IMR-90 (cell line): ENCODE measurements at regions of chr11 and their contacts with region 1.

Region 1: GRCh38 chr11:108697872-108698473 is 33.1 kb downstream of the DDX10 start:
- DNase-seq: peak; percentile 82
- ATAC-seq: peak; percentile 92
- H3K4me3 ChIP-seq: no peak overlapping the region
- H3K27ac ChIP-seq: no peak overlapping the region
- H3K4me1 ChIP-seq: peaks cover 10% of the 10 kb centered on the region
- H3K27me3 ChIP-seq: no peaks in the 10 kb centered on the region
- CTCF ChIP-seq: peak; percentile 99
- POLR2A ChIP-seq: peak; percentile 60
- RAD21 ChIP-seq: peak; percentile 99

Region 2: GRCh38 chr11:107648242-107648641 is 1049.7 kb before region 1 on chr11:
- CTCF ChIA-PET with region 1: no interaction called
- POLR2A ChIA-PET with region 1: no interaction called
- dilution Hi-C with region 1: no loop called
- in situ Hi-C with region 1: no loop called
- intact Hi-C with region 1: no loop called
- DNase-seq: no peak
- ATAC-seq: no peak
- H3K4me3 ChIP-seq: no peak overlapping the region
- H3K27ac ChIP-seq: no peak overlapping the region
- H3K4me1 ChIP-seq: no peaks in the 10 kb centered on the region
- H3K27me3 ChIP-seq: peaks cover 4% of the 10 kb centered on the region; the same call in 1 of the 2 replicates
- CTCF ChIP-seq: no peak
- POLR2A ChIP-seq: no peak
- RAD21 ChIP-seq: no peak

Region 3: DNA sequence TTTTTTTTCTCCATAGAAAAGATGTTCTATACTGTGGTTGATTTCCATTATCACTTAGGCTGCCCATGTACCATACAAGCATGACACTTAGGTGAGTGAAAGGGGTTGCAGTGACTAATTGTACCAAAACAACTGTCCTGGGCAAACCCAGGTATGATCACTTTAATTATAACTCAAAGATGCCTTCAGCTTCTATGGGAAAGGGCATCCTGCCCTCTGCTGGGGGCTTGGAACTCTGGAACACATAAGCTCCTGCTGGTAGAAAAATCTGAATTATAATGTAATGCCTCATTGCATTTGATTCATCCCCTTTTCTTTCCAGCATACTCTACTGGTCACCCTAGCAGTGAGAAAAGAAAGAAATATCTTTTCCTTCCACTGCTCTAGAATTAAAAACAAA is 173.2 kb after region 1 on chr11:
- CTCF ChIA-PET with region 1: interaction called, 11 read pairs
- POLR2A ChIA-PET with region 1: no interaction called
- dilution Hi-C with region 1: no loop called
- in situ Hi-C with region 1: no loop called
- intact Hi-C with region 1: loop called (anchors 1 kb)
- DNase-seq: peak; percentile 75
- ATAC-seq: peak; percentile 58
- H3K4me3 ChIP-seq: no peak overlapping the region
- H3K27ac ChIP-seq: peak overlapping the region; percentile 85; the same call in 1 of the 2 replicates
- H3K4me1 ChIP-seq: peaks cover 4% of the 10 kb centered on the region
- H3K27me3 ChIP-seq: no peaks in the 10 kb centered on the region
- CTCF ChIP-seq: peak; percentile 68
- POLR2A ChIP-seq: no peak
- RAD21 ChIP-seq: peak; percentile 74

Region 4: DNA sequence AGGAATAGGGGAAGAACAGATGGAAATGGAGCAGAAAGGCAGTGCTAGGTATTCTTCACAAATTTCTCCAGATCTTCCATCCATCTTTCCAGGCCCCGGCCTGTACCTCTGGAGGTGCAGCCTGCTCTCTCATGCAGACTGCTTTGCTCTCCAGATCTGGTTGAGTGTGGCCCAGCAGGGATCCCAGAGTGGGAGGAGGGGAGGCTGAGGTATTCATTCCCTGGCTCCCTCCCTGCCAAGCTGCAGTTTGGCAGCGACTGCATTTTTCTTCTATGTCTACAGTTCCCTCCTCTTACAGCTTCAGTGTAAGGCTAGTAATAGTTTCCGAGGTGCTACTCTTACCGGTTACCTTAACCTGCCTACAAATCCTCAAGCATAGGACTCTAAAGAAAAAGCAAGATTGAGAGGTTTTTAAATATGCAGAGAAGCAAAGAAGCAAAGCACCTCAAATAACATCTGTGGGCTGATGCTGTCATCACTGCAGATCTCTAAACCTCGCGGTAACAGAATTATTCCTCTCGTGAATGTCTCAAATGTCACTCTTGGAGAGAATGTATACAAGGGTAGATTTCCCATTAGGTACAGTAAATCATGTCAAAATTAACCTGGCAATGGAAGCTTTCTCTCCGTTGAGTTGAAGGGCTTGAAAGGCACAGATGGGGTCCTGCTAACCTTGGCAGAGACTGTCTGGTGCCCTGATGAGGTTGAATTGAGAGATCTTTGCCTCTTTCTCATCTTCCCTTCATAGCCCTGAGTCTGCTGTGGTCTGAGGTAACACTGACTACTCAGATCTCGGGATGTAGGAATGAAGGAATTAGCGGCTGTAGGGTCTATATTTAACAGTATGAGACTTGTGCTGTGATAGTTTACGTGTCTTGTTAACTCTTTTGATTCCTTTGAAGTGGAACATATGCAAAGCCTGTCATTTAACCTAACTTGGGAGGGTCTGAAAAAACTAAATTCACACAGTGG is 426.1 kb after region 1 on chr11:
- CTCF ChIA-PET with region 1: no interaction called
- POLR2A ChIA-PET with region 1: no interaction called
- dilution Hi-C with region 1: no loop called
- in situ Hi-C with region 1: no loop called
- intact Hi-C with region 1: loop called (anchors 1 kb)
- DNase-seq: peak; percentile 4
- ATAC-seq: peak; percentile 81
- H3K4me3 ChIP-seq: no peak overlapping the region
- H3K27ac ChIP-seq: no peak overlapping the region
- H3K4me1 ChIP-seq: peaks cover 2% of the 10 kb centered on the region; the same call in 1 of the 2 replicates
- H3K27me3 ChIP-seq: no peaks in the 10 kb centered on the region
- CTCF ChIP-seq: no peak
- POLR2A ChIP-seq: no peak
- RAD21 ChIP-seq: no peak

Region 5: GRCh38 chr11:109422870-109423465 is 725.0 kb after region 1 on chr11:
- CTCF ChIA-PET with region 1: no interaction called
- POLR2A ChIA-PET with region 1: interaction called, 5 read pairs
- dilution Hi-C with region 1: no loop called
- in situ Hi-C with region 1: no loop called
- intact Hi-C with region 1: loop called (anchors 5 kb)
- DNase-seq: no peak
- ATAC-seq: peak; percentile 57
- H3K4me3 ChIP-seq: peak overlapping the region; percentile 40
- H3K27ac ChIP-seq: no peak overlapping the region
- H3K4me1 ChIP-seq: peaks cover 4% of the 10 kb centered on the region
- H3K27me3 ChIP-seq: peaks cover 11% of the 10 kb centered on the region; the same call in 1 of the 2 replicates
- CTCF ChIP-seq: no peak
- POLR2A ChIP-seq: no peak
- RAD21 ChIP-seq: no peak

Region 6: DNA sequence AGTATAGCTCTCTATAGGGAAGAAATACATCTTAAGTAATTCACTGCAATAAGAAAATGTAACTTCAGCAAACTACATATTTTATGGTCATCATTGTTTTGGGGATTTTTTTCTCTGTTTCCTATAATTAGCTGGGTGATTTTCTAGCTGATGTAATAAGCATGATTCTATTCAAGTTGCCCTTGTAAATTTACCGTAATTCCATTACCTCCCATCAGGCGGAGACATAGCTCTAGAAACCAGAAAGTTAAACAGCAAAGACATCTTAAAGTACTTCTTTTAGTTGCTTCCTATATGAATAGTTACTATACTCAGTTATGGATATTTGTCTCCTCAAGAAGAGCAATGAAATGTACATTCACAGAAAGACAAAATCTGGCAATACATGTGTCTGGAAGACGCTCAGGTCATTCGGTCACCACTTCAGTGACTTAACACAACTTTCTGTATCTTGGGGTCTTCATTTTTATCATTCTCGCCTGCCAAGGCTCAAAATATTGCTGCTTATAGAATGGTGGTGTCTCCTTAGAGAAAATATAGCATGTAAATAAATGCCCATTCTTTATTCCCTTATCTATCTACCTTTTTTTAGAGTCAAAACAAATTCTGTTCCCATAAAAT is 1155.3 kb after region 1 on chr11:
- CTCF ChIA-PET with region 1: no interaction called
- POLR2A ChIA-PET with region 1: no interaction called
- dilution Hi-C with region 1: no loop called
- in situ Hi-C with region 1: no loop called
- intact Hi-C with region 1: loop called (anchors 5 kb)
- DNase-seq: peak; percentile 87
- ATAC-seq: peak; percentile 87
- H3K4me3 ChIP-seq: no peak overlapping the region
- H3K27ac ChIP-seq: no peak overlapping the region
- H3K4me1 ChIP-seq: no peaks in the 10 kb centered on the region; the same call in 1 of the 2 replicates
- H3K27me3 ChIP-seq: no peaks in the 10 kb centered on the region
- CTCF ChIP-seq: peak; percentile 91
- POLR2A ChIP-seq: no peak
- RAD21 ChIP-seq: peak; percentile 87

Region 7: GRCh38 chr11:109946322-109946846 is 1248.4 kb after region 1 on chr11:
- CTCF ChIA-PET with region 1: no interaction called
- POLR2A ChIA-PET with region 1: no interaction called
- dilution Hi-C with region 1: no loop called
- in situ Hi-C with region 1: loop called (anchors 25 kb)
- intact Hi-C with region 1: no loop called
- DNase-seq: peak; percentile 97
- ATAC-seq: peak; percentile 99
- H3K4me3 ChIP-seq: peak overlapping the region; percentile 32; the same call in 1 of the 2 replicates
- H3K27ac ChIP-seq: peak overlapping the region; percentile 86; the same call in 1 of the 2 replicates
- H3K4me1 ChIP-seq: peaks cover 3% of the 10 kb centered on the region
- H3K27me3 ChIP-seq: no peaks in the 10 kb centered on the region
- CTCF ChIP-seq: peak; percentile 97
- POLR2A ChIP-seq: peak; percentile 83
- RAD21 ChIP-seq: peak; percentile 97